BJ (cell line): ENCODE measurements at regions of chr7 and their contacts with region 1.

Region 1: GRCh38 chr7:151448261-151449252 is 8.6 kb upstream of the CRYGN start:
- DNase-seq: no peak
- H3K4me3 ChIP-seq: peak overlapping the region; percentile 44
- H3K27me3 ChIP-seq: peaks cover 2% of the 10 kb centered on the region; the same call in 1 of the 2 replicates
- CTCF ChIP-seq: peak; percentile 82

Region 2: DNA sequence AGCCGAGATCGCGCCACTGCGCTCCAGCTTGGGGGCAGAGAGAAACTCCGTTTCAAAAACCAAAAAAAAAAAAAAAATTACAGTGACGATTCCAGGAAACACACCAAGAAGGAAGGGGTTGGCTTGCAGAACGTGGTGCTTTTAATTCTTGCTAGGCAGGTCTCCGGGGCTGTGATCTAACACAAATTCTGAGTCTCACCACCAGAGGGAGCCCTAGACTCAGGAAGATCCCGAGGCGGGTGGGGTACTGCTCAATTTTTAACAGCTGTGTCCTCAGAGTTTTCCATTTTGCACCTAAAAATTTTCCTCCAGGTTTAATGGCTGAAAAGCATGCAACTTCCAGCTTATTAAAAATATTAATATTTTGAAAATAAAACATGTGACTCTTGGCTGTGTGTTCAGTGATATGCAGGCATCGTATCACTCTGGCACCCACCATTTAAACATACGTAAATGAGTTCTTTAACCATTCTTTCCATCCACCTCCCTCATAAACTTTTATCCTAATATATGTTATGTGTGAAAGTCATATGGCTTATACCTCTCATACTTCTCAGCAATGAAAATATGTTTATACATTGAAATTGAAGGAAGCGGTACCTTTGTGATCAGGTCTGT is 133.4 kb before region 1 on chr7:
- CTCF ChIA-PET with region 1: interaction called, 46 read pairs
- POLR2A ChIA-PET with region 1: no interaction called
- DNase-seq: no peak
- H3K4me3 ChIP-seq: no peak overlapping the region
- H3K27me3 ChIP-seq: peaks cover 5% of the 10 kb centered on the region; the same call in 1 of the 2 replicates
- CTCF ChIP-seq: peak; percentile 78

Region 3: DNA sequence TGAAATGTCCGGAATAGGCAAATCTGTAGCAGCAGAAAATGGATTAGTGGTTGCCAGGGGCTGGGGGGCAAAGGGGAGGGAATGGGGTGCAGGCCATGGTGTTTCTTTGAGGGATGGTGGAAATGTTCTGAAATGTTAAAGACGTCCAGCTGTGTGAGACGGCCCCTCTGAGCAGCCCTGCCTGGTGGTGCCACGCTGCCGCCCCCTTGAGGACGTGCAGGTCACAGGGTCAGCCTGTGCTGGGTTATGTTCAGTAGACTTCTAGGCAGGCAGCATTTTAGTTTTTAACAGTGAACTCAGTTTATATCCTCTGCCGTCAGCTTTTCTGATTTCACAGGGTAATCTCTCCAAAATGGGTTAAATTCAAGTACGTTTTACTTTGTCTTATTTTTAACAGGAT is 97.5 kb before region 1 on chr7:
- CTCF ChIA-PET with region 1: interaction called, 28 read pairs
- POLR2A ChIA-PET with region 1: no interaction called
- DNase-seq: no peak
- H3K4me3 ChIP-seq: no peak overlapping the region
- H3K27me3 ChIP-seq: no peaks in the 10 kb centered on the region
- CTCF ChIP-seq: 0 out of 2 replicates have a peak, but pooled peaks have one; percentile 17

Region 4: GRCh38 chr7:151368136-151368571 is 80.4 kb before region 1 on chr7:
- CTCF ChIA-PET with region 1: interaction called, 148 read pairs
- POLR2A ChIA-PET with region 1: no interaction called
- DNase-seq: no peak
- H3K4me3 ChIP-seq: no peak overlapping the region
- H3K27me3 ChIP-seq: no peaks in the 10 kb centered on the region
- CTCF ChIP-seq: peak; percentile 98

Region 5: GRCh38 chr7:151420144-151420543 is 28.4 kb before region 1 on chr7:
- CTCF ChIA-PET with region 1: interaction called, 10 read pairs
- POLR2A ChIA-PET with region 1: no interaction called
- DNase-seq: no peak
- H3K4me3 ChIP-seq: no peak overlapping the region
- H3K27me3 ChIP-seq: peaks cover 15% of the 10 kb centered on the region
- CTCF ChIP-seq: no peak

Region 6: DNA sequence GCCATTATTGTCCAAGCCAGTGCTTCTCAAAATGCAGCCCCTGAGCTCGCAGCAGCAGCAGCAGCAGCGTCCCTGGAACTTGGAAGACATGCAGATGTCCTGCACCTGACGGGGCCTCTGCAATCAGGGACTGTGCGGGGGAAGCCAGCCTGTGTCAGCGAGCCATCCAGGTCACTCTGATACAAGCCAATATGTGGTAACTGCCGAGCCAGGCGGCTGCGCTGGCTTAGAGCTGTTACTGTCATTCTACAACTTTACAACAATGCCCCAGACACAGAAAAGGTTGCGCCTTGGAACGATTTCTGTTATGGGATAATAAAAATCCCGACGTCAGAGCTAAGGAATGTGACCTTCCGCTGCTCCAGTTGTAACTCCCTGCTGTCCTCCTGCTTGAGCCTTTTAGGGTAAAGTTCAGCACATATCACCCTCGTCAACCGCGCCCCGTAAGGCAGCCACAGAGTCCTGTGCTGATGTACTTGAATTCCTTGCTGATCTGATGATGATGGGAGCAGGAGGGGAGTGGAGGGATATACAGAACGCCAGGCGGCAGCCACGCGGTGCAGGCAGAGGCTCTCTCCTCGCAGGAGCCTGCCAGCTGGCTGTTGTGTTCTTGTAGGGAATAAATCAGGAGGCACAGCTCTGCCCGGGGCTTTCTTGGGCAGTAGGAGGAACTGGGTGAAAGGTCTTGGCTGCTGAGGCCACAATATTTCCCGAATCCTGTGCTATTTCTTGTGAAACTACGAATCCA is 11.3 kb after region 1 on chr7:
- CTCF ChIA-PET with region 1: interaction called, 42 read pairs
- POLR2A ChIA-PET with region 1: no interaction called
- DNase-seq: peak; percentile 91
- H3K4me3 ChIP-seq: peak overlapping the region; percentile 3; the same call in 1 of the 2 replicates
- H3K27me3 ChIP-seq: no peaks in the 10 kb centered on the region
- CTCF ChIP-seq: peak; percentile 61